Activated B cell treated with CpG ODN at 0.5 μM for 24 hours (primary cell): ENCODE measurements at regions of chr11 and their contacts with region 1.

Region 1: DNA sequence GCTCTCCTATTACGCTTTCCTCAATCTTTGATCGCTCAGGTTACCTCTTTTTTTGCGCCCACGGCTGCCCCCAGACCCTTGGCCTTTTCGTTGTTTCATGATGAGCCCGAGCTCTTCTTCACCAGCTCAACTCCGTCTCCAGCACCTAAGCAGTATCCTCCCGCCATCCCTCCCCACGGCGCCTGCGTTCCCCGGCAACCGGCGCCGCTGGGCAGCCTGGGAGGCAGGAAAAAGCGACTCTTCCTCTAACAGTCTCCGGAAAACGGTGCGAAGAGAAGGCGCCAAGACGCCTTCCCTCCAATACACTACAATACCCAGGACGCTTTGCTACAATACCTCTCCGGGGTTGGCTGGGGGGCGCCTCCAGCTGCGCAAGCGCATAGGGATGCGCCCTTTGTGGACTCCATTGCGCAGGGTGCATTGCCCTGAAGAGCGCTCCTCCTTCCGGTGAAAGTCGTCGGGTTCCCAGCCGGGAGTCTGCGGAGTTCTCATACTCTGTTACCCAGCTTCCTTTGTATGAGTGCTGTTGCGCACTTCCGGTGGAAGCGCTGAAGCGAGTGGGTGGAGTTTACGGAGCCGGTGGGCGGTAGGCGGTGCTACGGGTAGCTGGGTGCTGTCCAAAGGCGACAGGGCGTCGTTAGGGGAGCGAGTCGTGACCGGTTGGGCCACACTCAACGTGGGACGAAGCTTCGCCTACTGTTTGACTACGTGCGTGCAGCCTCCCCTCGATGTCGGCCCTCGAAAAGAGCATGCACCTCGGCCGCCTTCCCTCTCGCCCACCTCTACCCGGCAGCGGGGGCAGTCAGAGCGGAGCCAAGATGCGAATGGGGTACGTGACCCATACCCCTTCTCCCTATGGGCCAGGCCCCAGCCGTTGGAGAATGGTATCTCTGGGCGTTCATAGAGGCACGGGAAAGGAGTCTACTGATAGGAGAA is at the starts of genes C2CD3 and PPME1:
- DNase-seq: peak; percentile 94
- ATAC-seq: peak; percentile 93
- H3K4me3 Mint-ChIP-seq: no peak within 1 kb of the TSS
- H3K27ac Mint-ChIP-seq: no peak within 1 kb of the TSS
- H3K4me1 Mint-ChIP-seq: peaks cover 12% of the 10 kb centered on the region
- H3K27me3 Mint-ChIP-seq: no peaks in the 10 kb centered on the region
- CTCF ChIP-seq: no peak
- total RNA-seq, gene C2CD3: 36.2 and 50.3 TPM in 2 replicates
- total RNA-seq, gene PPME1: 12.4 and 17.3 TPM in 2 replicates

Region 2: GRCh38 chr11:73779084-73779902 is 391.7 kb before region 1 on chr11:
- CTCF ChIA-PET with region 1: no interaction called
- POLR2A ChIA-PET with region 1: interaction called, 6 read pairs
- intact Hi-C with region 1: loop called (anchors 2 kb)
- DNase-seq: peak; percentile 94
- ATAC-seq: peak; percentile 99
- H3K4me3 Mint-ChIP-seq: peak overlapping the region; percentile 94
- H3K27ac Mint-ChIP-seq: peak overlapping the region; percentile 98
- H3K4me1 Mint-ChIP-seq: peaks cover 8% of the 10 kb centered on the region
- H3K27me3 Mint-ChIP-seq: peaks cover 2% of the 10 kb centered on the region
- CTCF ChIP-seq: no peak

Region 3: GRCh38 chr11:73876424-73877300 is 294.3 kb before region 1 on chr11 and contains the starts of genes COA4 and PAAF1:
- CTCF ChIA-PET with region 1: no interaction called
- POLR2A ChIA-PET with region 1: interaction called, 4 read pairs
- intact Hi-C with region 1: loop called (anchors 2 kb)
- DNase-seq: peak; percentile 80
- ATAC-seq: peak; percentile 98
- H3K4me3 Mint-ChIP-seq: peak within 1 kb of the TSS; percentile 99
- H3K27ac Mint-ChIP-seq: peak within 1 kb of the TSS; percentile 98
- H3K4me1 Mint-ChIP-seq: peaks cover 34% of the 10 kb centered on the region
- H3K27me3 Mint-ChIP-seq: no peaks in the 10 kb centered on the region
- CTCF ChIP-seq: no peak
- total RNA-seq, gene COA4: 75.9 and 79.8 TPM in 2 replicates
- total RNA-seq, gene PAAF1: 19.6 and 20.2 TPM in 2 replicates

Region 4: GRCh38 chr11:73971175-73971719 is 199.7 kb before region 1 on chr11:
- CTCF ChIA-PET with region 1: no interaction called
- POLR2A ChIA-PET with region 1: interaction called, 12 read pairs
- intact Hi-C with region 1: no loop called
- DNase-seq: no peak
- ATAC-seq: peak; percentile 29
- H3K4me3 Mint-ChIP-seq: peak overlapping the region; percentile 38
- H3K27ac Mint-ChIP-seq: peak overlapping the region; percentile 100
- H3K4me1 Mint-ChIP-seq: peaks cover 88% of the 10 kb centered on the region
- H3K27me3 Mint-ChIP-seq: no peaks in the 10 kb centered on the region
- CTCF ChIP-seq: no peak

Region 5: GRCh38 chr11:75492181-75492820 is 1321.3 kb after region 1 on chr11:
- CTCF ChIA-PET with region 1: no interaction called
- POLR2A ChIA-PET with region 1: no interaction called
- intact Hi-C with region 1: no loop called
- DNase-seq: peak; percentile 27
- ATAC-seq: peak; percentile 94
- H3K4me3 Mint-ChIP-seq: peak overlapping the region; percentile 53
- H3K27ac Mint-ChIP-seq: no peak overlapping the region
- H3K4me1 Mint-ChIP-seq: peaks cover 13% of the 10 kb centered on the region
- H3K27me3 Mint-ChIP-seq: no peaks in the 10 kb centered on the region
- CTCF ChIP-seq: no peak